CD4-positive, alpha-beta memory T cell (primary cell): ENCODE measurements at regions of chr17 and their contacts with region 1.

Region 1: DNA sequence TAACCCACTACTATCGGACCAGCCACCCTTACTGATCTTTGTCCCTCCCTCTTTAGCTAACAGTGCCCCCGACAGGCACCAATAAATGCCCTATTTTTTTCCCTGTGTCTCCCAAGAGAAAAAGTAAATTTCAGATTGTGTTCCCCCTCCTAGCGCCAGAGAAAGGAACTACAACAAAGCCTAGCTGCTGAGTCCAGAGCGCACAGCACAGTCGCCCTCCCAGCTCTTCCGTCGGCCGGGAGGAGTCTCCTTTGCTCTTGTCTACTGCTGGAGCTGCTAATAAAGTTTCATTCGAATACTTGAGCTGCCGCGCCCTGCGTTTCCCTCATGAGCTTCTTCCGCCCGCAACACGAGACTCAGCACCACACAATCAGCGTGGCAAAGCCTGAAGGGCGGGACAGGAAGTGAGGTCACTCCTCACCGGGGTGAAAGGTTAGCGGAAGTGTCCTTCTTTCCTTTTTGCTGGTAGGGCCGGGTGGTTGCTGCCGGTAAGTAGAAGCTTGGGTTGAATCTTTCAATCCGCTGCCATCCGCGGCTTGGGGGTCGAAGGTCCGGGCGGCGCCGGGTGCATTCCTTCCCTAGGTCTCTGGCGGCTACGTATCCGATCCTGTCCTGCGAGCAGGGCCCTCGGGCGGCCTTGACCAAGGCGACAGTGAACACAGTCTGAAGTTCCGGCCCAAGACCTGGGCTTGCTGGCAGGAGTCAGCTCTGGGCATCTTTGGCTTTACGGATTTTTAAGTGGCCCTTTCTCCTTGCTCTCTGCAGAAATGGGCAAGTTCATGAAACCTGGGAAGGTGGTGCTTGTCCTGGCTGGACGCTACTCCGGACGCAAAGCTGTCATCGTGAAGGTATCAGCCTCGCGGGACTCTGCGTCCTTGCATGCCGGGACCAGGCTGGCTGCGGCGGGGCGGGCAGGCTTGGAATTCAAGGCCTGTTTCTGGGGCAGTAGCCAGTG is at the start of gene RPL27:
- DNase-seq: peak; percentile 95 to 99 (median 99)
- H3K4me3 ChIP-seq: peak within 1 kb of the TSS; percentile 79 to 94
- H3K4me3 Mint-ChIP-seq: peak within 1 kb of the TSS; percentile 94 to 98 (median 96)
- H3K27ac ChIP-seq: peak within 1 kb of the TSS; percentile 99
- H3K27ac Mint-ChIP-seq: peak within 1 kb of the TSS; percentile 96 to 99 (median 99)
- H3K4me1 ChIP-seq: peaks cover 22% of the 10 kb centered on the region
- H3K4me1 Mint-ChIP-seq: peaks cover 16 to 36% (median 24%) of the 10 kb centered on the region in 4 donors
- H3K27me3 ChIP-seq: no peaks in the 10 kb centered on the region
- H3K27me3 Mint-ChIP-seq: peaks cover 0 to 2% of the 10 kb centered on the region in 2 donors
- total RNA-seq, gene RPL27: 1,574 to 1,622 TPM

Region 2: GRCh38 chr17:42773290-42774035 is 224.8 kb before region 1 on chr17 and contains the start of gene VPS25:
- CTCF ChIA-PET with region 1: interaction called, 6 read pairs
- POLR2A ChIA-PET with region 1: interaction called, 14 read pairs
- intact Hi-C with region 1: no loop called
- DNase-seq: peak; percentile 70 to 77 (median 71)
- H3K4me3 ChIP-seq: peak within 1 kb of the TSS; percentile 90 to 100
- H3K4me3 Mint-ChIP-seq: peak within 1 kb of the TSS; percentile 98 to 99 (median 99)
- H3K27ac ChIP-seq: peak within 1 kb of the TSS; percentile 81
- H3K27ac Mint-ChIP-seq: peak within 1 kb of the TSS; percentile 91 to 99 (median 98)
- H3K4me1 ChIP-seq: peaks cover 17% of the 10 kb centered on the region
- H3K4me1 Mint-ChIP-seq: peaks cover 11 to 28% (median 19%) of the 10 kb centered on the region in 4 donors
- H3K27me3 ChIP-seq: no peaks in the 10 kb centered on the region
- H3K27me3 Mint-ChIP-seq: no peaks in the 10 kb centered on the region
- total RNA-seq, gene VPS25: 39.3 to 43.6 TPM

Region 3: GRCh38 chr17:42964161-42964932 is 33.9 kb before region 1 on chr17 and contains the start of gene AARSD1:
- CTCF ChIA-PET with region 1: interaction called, 8 read pairs
- POLR2A ChIA-PET with region 1: interaction called, 26 read pairs
- intact Hi-C with region 1: loop called (anchors 1 kb)
- DNase-seq: peak; percentile 89 to 93 (median 89)
- H3K4me3 ChIP-seq: peak within 1 kb of the TSS; percentile 56 to 59
- H3K4me3 Mint-ChIP-seq: peak within 1 kb of the TSS; percentile 91 to 99 (median 97)
- H3K27ac ChIP-seq: peak within 1 kb of the TSS; percentile 71
- H3K27ac Mint-ChIP-seq: peak within 1 kb of the TSS; percentile 79 to 99 (median 98)
- H3K4me1 ChIP-seq: peaks cover 11% of the 10 kb centered on the region
- H3K4me1 Mint-ChIP-seq: peaks cover 10 to 22% (median 15%) of the 10 kb centered on the region in 4 donors
- H3K27me3 ChIP-seq: no peaks in the 10 kb centered on the region
- H3K27me3 Mint-ChIP-seq: no peaks in the 10 kb centered on the region
- total RNA-seq, gene AARSD1: 53.0 to 55.6 TPM

Region 4: DNA sequence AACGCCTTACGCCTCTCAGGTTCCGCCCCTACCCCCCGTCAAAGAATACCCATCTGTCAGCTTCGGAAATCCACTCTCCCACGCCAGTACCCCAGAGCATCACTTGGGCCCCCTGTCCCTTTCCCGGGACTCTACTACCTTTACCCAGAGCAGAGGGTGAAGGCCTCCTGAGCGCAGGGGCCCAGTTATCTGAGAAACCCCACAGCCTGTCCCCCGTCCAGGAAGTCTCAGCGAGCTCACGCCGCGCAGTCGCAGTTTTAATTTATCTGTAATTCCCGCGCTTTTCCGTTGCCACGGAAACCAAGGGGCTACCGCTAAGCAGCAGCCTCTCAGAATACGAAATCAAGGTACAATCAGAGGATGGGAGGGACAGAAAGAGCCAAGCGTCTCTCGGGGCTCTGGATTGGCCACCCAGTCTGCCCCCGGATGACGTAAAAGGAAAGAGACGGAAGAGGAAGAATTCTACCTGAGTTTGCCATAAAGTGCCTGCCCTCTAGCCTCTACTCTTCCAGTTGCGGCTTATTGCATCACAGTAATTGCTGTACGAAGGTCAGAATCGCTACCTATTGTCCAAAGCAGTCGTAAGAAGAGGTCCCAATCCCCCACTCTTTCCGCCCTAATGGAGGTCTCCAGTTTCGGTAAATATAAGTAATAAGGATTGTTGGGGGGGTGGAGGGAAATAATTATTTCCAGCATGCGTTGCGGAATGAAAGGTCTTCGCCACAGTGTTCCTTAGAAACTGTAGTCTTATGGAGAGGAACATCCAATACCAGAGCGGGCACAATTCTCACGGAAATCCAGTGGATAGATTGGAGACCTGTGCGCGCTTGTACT is 127.1 kb after region 1 on chr17 and contains the start of gene BRCA1:
- CTCF ChIA-PET with region 1: no interaction called
- POLR2A ChIA-PET with region 1: interaction called, 6 read pairs
- intact Hi-C with region 1: loop called (anchors 1 kb)
- DNase-seq: peak; percentile 95 to 98 (median 97)
- H3K4me3 ChIP-seq: peak within 1 kb of the TSS; percentile 80 to 89
- H3K4me3 Mint-ChIP-seq: peak within 1 kb of the TSS; percentile 87 to 98 (median 96)
- H3K27ac ChIP-seq: peak within 1 kb of the TSS; percentile 72
- H3K27ac Mint-ChIP-seq: peak within 1 kb of the TSS; percentile 82 to 98 (median 96)
- H3K4me1 ChIP-seq: peaks cover 17% of the 10 kb centered on the region
- H3K4me1 Mint-ChIP-seq: peaks cover 19 to 35% (median 27%) of the 10 kb centered on the region in 4 donors
- H3K27me3 ChIP-seq: no peaks in the 10 kb centered on the region
- H3K27me3 Mint-ChIP-seq: no peaks in the 10 kb centered on the region
- total RNA-seq, gene BRCA1: 4.8 to 6.0 TPM

Region 5: GRCh38 chr17:43316522-43317142 is 318.4 kb after region 1 on chr17:
- CTCF ChIA-PET with region 1: interaction called, 4 read pairs
- POLR2A ChIA-PET with region 1: interaction called, 32 read pairs
- intact Hi-C with region 1: no loop called
- DNase-seq: peak in 3 of 5 donors; percentile 20 to 53 (median 20)
- H3K4me3 ChIP-seq: no peak overlapping the region
- H3K4me3 Mint-ChIP-seq: peak overlapping the region in 6 of 8 donors; percentile 5 to 62 (median 44)
- H3K27ac ChIP-seq: no peak overlapping the region
- H3K27ac Mint-ChIP-seq: peak overlapping the region in 2 of 7 donors; percentile 65 to 79
- H3K4me1 ChIP-seq: no peaks in the 10 kb centered on the region
- H3K4me1 Mint-ChIP-seq: peaks cover 5 to 17% (median 11%) of the 10 kb centered on the region in 4 donors
- H3K27me3 ChIP-seq: no peaks in the 10 kb centered on the region
- H3K27me3 Mint-ChIP-seq: no peaks in the 10 kb centered on the region

Region 6: GRCh38 chr17:43388359-43389045 is 390.2 kb after region 1 on chr17:
- CTCF ChIA-PET with region 1: no interaction called
- POLR2A ChIA-PET with region 1: interaction called, 18 read pairs
- intact Hi-C with region 1: loop called (anchors 1 kb)
- DNase-seq: peak; percentile 92 to 95 (median 93)
- H3K4me3 ChIP-seq: peak overlapping the region; percentile 73 to 86
- H3K4me3 Mint-ChIP-seq: peak overlapping the region; percentile 92 to 100 (median 97)
- H3K27ac ChIP-seq: peak overlapping the region; percentile 93
- H3K27ac Mint-ChIP-seq: peak overlapping the region; percentile 97 to 100 (median 98)
- H3K4me1 ChIP-seq: peaks cover 19% of the 10 kb centered on the region
- H3K4me1 Mint-ChIP-seq: peaks cover 12 to 35% (median 27%) of the 10 kb centered on the region in 4 donors
- H3K27me3 ChIP-seq: no peaks in the 10 kb centered on the region
- H3K27me3 Mint-ChIP-seq: no peaks in the 10 kb centered on the region